ENCODE measurements at regions of chr22 and their contacts with region 1.

Region 1: GRCh38 chr22:42437488-42438292 is 5.5 kb upstream of the NFAM1 start:
- DNase-seq: no peak
- H3K4me3 ChIP-seq: peak overlapping the region; percentile 60
- CTCF ChIP-seq: peak; percentile 94

Region 2: DNA sequence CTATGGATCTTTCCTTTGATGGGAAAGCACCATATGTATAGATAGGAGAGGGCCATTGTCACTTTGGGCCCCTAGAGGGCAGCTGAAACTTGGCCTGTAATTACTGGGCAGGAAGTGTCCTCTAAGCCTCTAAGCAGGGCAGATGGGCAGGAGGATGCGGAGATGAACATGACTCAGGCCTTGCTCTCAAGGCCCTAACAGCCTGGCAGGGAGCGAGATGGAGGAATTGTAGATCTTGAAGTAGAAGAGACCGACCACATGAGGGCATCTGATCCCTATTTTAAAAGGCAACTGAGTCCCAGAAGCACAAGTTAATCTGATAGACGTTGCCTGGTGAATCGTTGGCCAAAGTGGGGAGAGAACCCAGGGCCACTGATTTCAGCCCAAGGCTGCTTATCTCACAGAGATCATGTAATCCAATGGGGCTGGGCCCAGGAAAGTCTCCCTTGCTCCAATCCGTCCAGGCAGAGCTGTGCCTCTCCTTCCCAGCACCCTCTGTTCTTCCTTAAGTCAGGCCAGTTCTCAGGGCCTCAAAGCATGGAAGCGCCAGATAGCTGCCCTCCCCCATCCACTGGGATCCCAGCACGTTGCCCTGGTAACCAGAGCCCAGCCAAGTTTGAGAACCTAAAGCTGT is 471.0 kb before region 1 on chr22:
- CTCF ChIA-PET with region 1: interaction called, 52 read pairs
- POLR2A ChIA-PET with region 1: no interaction called
- DNase-seq: peak; percentile 63
- H3K4me3 ChIP-seq: no peak overlapping the region
- CTCF ChIP-seq: no peak

Region 3: DNA sequence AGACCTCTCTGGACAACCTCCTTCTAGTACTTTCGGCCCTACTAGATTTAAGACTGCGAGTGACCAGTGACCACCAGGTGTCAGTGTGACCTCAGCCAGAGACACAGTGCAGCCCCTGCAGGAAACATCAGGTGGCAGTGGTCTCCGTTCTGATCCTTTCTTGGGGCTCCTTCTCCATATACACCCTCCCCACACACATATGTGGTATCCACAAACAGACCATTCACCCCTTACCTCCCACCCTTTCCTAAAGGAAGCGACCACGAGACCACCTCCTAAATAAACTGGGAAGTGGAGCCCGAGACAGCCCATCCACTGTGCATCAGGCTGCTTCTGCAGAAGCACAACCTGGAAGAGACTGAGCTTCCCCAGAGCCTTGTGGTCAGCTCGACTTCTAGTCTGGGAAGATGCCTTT is 268.6 kb before region 1 on chr22:
- CTCF ChIA-PET with region 1: interaction called, 114 read pairs
- POLR2A ChIA-PET with region 1: no interaction called
- DNase-seq: no peak
- H3K4me3 ChIP-seq: no peak overlapping the region
- CTCF ChIP-seq: peak; percentile 94

Region 4: DNA sequence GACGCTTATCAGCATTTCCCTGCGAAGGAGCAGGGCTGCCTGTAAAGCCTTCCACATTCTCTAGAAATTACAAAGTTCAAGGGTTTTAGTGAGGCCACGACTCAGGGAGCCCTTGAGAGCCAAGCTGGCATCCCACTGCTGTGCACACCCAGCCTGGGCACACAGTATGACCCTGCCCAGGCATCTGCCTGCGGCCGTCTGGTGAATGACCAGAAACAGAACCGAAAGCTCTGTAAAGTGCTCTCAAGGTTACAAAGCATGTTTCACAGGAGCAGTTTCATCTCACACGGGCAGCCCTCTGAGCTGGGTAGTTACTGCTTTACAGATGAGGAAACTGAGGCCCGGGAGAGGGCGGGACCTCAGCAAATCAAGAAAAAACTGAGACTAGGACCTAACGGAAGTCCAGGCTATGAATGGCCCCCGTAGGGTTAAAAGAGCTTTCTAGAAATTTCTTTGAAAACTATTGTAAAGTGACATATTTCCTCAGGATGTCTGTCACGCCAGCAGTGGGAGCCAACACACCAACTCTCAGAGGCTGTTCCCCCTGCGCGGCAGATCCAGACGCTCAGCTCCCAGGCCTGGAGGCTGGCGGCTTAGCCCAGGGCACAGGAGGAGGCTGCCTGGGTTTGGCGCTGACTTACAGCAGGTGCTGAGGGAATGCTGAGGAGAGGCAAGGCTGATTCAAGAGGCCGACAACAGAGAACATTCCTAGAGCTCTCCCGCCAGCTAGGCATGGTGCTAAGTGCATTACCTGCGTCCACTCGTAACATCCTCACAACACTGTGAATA is 159.5 kb before region 1 on chr22:
- CTCF ChIA-PET with region 1: interaction called, 16 read pairs
- POLR2A ChIA-PET with region 1: no interaction called
- DNase-seq: no peak
- H3K4me3 ChIP-seq: no peak overlapping the region
- CTCF ChIP-seq: peak; percentile 12

Region 5: GRCh38 chr22:42452456-42452855 is 14.8 kb after region 1 on chr22:
- CTCF ChIA-PET with region 1: interaction called, 17 read pairs
- POLR2A ChIA-PET with region 1: no interaction called
- DNase-seq: no peak
- H3K4me3 ChIP-seq: no peak overlapping the region
- CTCF ChIP-seq: no peak